Activated CD4-positive, alpha-beta memory T cell treated with anti-CD3 and anti-CD28 coated beads for 36 hours (primary cell): ENCODE measurements at regions of chr1 and their contacts with region 1.

Region 1: GRCh38 chr1:2586154-2587070 is at the start of gene PRXL2B:
- DNase-seq: peak; percentile 99
- H3K4me3 Mint-ChIP-seq: peak within 1 kb of the TSS; percentile 83
- H3K27ac Mint-ChIP-seq: peak within 1 kb of the TSS; percentile 92
- H3K4me1 Mint-ChIP-seq: peaks cover 39% of the 10 kb centered on the region
- H3K27me3 Mint-ChIP-seq: no peaks in the 10 kb centered on the region
- total RNA-seq, gene PRXL2B: 28.2 to 34.6 TPM

Region 2: DNA sequence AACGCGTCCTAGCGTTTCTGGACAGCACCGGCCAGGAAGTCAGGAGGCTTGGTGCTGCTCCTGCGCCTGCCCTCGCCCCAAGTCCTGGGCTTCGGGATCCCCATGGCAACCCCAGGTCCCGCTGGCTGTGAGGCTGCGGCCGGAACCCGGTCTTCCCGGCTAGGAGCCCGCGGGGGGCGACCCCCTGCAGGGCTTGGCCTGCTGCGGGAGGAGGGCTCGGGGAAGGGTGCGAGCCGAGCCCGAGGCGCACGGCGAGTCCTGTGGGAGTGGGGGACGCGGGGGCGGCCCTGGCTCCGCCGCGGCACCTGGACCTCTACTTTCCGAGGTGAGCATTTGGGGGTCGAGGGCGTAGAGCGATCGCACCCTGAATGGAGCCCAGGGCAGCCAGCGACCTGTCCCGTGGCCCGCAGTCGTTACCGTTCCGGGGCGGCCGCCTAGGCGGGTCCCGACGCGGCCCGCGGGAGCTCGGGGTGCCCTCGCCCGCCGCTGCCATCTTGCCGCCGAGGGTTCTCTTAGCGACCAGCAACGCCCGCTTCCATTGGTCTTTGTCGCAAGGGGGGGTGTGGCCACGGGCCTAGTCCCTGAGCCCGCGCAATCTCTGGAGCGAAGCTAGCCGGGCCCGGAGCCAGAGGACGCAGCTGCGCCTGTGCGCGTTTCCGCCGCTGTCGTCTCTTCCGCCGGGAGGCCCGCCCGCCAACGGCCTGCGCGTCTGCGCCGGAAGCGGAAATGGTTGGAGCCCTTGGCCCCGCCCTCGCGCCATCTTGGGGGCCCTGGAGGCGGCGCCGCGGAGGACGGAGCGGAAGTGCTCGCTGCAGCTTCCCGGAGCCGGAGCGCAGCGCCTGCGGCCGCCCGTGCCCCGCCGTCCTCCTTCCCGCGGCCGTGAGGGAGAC is 195.1 kb before region 1 on chr1 and contains the starts of genes MORN1 and RER1:
- CTCF ChIA-PET with region 1: interaction called, 5 read pairs
- POLR2A ChIA-PET with region 1: interaction called, 10 read pairs
- intact Hi-C with region 1: no loop called
- DNase-seq: peak; percentile 99
- H3K4me3 Mint-ChIP-seq: peak within 1 kb of the TSS; percentile 93
- H3K27ac Mint-ChIP-seq: peak within 1 kb of the TSS; percentile 84
- H3K4me1 Mint-ChIP-seq: peaks cover 39% of the 10 kb centered on the region
- H3K27me3 Mint-ChIP-seq: no peaks in the 10 kb centered on the region
- total RNA-seq, gene MORN1: 5.4 to 6.3 TPM
- total RNA-seq, gene RER1: 148 to 154 TPM

Region 3: DNA sequence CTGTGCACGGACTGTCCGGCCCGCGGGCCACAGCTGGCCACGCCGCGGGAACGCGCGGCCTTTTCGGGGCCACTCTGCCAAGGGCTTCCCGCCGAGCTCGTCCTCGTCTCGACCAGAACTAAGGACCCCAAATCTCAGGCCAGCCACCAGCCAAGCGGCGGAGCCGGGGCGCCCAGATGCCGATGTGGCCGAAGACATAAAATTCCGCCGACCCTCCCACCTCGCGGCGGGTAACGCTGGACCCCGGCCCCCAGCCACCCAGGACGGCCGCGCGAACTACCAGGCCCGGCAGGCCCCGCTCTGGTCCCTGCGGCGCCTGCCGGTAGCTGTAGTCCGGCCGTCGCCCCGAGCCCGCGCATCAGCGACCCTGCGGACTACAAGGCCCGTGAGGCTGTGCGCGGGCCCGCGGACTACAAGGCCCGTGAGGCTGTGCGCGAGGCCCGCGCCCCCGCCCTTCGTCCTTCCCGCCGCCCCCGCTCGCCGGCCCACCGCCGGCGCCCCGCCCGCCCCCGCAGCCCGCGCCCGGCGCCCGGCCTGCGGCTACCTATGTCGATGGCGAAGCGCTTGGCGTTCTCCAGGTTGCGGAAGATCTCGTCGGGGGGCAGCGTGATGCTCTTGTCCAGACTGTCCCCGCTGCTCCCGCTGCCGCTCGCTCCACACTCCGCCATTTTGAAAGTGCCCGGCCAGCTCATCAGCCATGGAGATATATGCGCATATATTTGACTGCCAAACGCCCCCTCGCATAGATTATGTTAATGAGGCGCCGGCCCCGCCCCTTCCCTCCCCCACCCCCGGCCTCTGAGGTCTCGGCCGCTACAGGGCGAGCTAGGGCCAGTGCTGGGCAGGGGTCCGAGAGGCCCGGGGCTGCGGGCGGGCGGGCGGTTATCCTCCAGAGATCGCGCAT is 60.2 kb before region 1 on chr1 and contains the start of gene PANK4:
- CTCF ChIA-PET with region 1: interaction called, 4 read pairs
- POLR2A ChIA-PET with region 1: interaction called, 14 read pairs
- intact Hi-C with region 1: loop called (anchors 1 kb)
- DNase-seq: peak; percentile 92
- H3K4me3 Mint-ChIP-seq: peak within 1 kb of the TSS; percentile 85
- H3K27ac Mint-ChIP-seq: peak within 1 kb of the TSS; percentile 92
- H3K4me1 Mint-ChIP-seq: peaks cover 45% of the 10 kb centered on the region
- H3K27me3 Mint-ChIP-seq: peaks cover 5% of the 10 kb centered on the region
- total RNA-seq, gene PANK4: 42.6 to 45.1 TPM

Region 4: GRCh38 chr1:2561898-2562545 is 24.4 kb before region 1 on chr1:
- CTCF ChIA-PET with region 1: interaction called, 16 read pairs
- POLR2A ChIA-PET with region 1: interaction called, 67 read pairs
- intact Hi-C with region 1: no loop called
- DNase-seq: peak; percentile 50
- H3K4me3 Mint-ChIP-seq: no peak overlapping the region
- H3K27ac Mint-ChIP-seq: no peak overlapping the region
- H3K4me1 Mint-ChIP-seq: peaks cover 22% of the 10 kb centered on the region
- H3K27me3 Mint-ChIP-seq: no peaks in the 10 kb centered on the region

Region 5: DNA sequence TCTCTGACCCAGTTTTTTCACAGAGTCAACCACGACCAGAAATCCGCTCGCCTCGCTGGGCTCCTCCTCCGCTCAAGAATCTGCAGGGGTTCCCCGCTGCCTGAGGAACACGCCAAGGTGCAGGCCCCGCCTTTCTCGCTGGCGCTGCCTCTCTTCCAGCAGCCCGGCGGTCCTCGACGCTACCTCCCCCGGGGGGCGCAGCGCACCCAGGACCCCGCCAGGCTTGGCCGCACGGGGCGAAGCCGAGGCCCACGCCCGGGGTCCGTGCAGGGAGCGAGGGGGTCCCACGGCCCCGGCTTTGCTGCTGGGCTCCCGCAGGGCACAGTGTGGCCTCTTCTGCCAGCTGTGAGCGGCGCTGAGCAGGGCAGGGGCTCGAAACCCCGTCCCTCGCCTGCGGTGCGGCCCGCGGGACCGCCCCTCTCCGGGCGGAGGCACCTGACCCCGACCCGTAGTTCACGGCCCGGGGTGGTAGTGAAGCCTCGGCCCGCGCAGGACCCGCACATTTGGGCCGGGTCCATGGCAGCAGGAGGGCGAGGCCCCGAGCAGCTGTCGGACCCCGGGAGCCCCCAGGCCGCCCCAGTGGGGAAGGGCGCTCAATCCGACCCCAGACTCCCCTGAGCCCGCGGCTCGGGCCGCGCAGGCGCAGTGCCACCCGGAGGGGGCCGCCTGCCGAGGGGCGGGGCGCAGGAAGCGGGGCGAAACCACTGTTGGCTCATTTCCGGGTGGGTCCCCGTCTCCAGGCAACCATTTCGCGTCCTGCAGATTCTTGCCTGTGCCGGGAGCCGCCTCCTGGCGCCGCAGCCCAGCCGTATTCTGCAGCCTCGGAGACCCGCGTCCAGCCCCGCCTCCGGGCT is 56.4 kb after region 1 on chr1:
- CTCF ChIA-PET with region 1: no interaction called
- POLR2A ChIA-PET with region 1: interaction called, 3 read pairs
- intact Hi-C with region 1: loop called (anchors 2 kb)
- DNase-seq: peak; percentile 97
- H3K4me3 Mint-ChIP-seq: peak overlapping the region; percentile 85
- H3K27ac Mint-ChIP-seq: peak overlapping the region; percentile 89
- H3K4me1 Mint-ChIP-seq: peaks cover 10% of the 10 kb centered on the region
- H3K27me3 Mint-ChIP-seq: no peaks in the 10 kb centered on the region